ENCODE measurements at regions of chr19 and their contacts with region 1.

Region 1: DNA sequence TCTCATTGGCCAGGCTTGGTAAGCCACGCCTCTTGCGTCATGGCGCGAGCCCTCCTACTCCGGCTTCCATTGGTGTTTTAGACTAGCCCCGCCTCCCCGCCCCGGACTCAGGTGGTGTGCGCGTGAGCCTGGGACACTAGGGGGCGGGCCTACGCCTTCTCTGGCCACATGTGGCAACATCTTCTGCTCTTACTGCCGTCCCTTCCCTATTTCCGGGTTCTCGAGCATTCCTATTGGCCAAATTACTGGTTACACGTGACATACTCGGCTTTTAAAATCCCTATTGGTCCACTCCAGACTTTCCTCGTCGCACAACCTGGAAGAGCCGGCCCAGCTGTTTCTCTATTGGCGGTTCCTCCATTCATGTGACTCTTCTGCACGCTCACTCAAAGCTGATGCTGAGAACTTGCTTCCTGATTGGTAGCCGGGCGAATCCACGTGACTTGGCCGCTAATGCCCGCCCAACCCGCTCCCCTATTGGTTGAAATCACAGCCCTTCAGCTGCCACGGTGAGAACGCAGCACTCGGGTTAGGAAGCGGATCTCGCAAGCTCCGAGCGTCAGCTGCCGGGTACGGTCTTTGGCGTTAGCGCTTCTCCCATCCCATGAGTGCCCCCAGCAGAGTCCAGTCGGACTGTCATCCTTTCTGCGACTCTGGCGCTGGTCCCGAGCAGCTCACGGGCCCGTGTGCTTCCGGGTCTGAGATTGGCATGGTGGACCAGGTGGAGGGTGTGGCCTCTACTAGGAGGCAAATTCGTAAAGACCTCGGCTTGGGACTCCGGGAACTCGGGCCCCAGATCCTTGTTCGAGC is at the start of gene BLOC1S3:
- DNase-seq: peak; percentile 97 to 100 (median 100)
- ATAC-seq: peak; percentile 93
- H3K4me3 ChIP-seq: peak within 1 kb of the TSS; percentile 88
- H3K4me3 Mint-ChIP-seq: peak within 1 kb of the TSS; percentile 87 to 99 (median 96)
- H3K27ac ChIP-seq: peak within 1 kb of the TSS; percentile 83
- H3K27ac Mint-ChIP-seq: peak within 1 kb of the TSS; percentile 88 to 98 (median 94)
- H3K4me1 ChIP-seq: peaks cover 23 to 34% of the 10 kb centered on the region in 2 donors
- H3K4me1 Mint-ChIP-seq: peaks cover 9 to 63% (median 49%) of the 10 kb centered on the region in 7 donors
- H3K27me3 ChIP-seq: no peaks in the 10 kb centered on the region
- H3K27me3 Mint-ChIP-seq: no peaks in the 10 kb centered on the region
- total RNA-seq, gene BLOC1S3: 13.7 to 24.9 (median 15.4) TPM

Region 2: DNA sequence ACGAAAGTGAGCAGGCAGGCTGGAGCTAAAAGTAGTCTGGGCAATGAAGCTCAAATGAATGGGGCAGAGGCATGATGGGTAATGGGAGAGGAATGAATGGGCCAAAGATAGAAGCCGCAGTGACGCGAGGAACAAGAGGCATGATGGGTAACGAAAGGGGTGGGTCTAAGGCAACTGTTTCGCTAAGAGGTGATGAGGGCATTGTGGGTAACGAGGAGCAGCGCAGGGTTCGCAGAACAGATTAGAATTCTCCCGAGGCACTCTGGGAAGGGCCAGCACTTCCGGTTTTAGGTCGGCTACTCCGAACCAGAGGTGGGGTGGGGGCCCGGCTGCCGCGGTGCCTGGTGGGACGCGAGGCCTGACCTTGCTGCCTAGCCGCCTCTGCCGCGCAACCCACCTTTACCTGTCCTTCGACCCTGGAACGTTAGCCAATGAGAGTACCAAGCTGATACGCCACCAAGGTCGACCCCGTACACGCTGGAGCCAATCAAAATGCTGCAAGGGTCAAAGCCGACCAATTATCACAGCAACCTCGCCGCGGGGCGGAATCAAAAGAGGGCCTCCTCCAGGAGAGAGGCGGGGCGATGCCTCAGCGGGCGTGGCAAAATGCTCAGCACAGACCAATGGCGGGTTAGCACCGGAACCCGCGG is 288.0 kb before region 1 on chr19:
- CTCF ChIA-PET with region 1: no interaction called
- POLR2A ChIA-PET with region 1: interaction called, 3 read pairs
- intact Hi-C with region 1: loop called (anchors 1 to 2 kb)
- DNase-seq: peak; percentile 97 to 100 (median 100)
- ATAC-seq: peak; percentile 86
- H3K4me3 ChIP-seq: peak overlapping the region; percentile 69
- H3K4me3 Mint-ChIP-seq: peak overlapping the region; percentile 83 to 93 (median 89)
- H3K27ac ChIP-seq: peak overlapping the region; percentile 84
- H3K27ac Mint-ChIP-seq: peak overlapping the region; percentile 90 to 96 (median 94)
- H3K4me1 ChIP-seq: peaks cover 10 to 20% of the 10 kb centered on the region in 2 donors
- H3K4me1 Mint-ChIP-seq: peaks cover 18 to 44% (median 35%) of the 10 kb centered on the region in 7 donors
- H3K27me3 ChIP-seq: no peaks in the 10 kb centered on the region
- H3K27me3 Mint-ChIP-seq: no peaks in the 10 kb centered on the region

Region 3: DNA sequence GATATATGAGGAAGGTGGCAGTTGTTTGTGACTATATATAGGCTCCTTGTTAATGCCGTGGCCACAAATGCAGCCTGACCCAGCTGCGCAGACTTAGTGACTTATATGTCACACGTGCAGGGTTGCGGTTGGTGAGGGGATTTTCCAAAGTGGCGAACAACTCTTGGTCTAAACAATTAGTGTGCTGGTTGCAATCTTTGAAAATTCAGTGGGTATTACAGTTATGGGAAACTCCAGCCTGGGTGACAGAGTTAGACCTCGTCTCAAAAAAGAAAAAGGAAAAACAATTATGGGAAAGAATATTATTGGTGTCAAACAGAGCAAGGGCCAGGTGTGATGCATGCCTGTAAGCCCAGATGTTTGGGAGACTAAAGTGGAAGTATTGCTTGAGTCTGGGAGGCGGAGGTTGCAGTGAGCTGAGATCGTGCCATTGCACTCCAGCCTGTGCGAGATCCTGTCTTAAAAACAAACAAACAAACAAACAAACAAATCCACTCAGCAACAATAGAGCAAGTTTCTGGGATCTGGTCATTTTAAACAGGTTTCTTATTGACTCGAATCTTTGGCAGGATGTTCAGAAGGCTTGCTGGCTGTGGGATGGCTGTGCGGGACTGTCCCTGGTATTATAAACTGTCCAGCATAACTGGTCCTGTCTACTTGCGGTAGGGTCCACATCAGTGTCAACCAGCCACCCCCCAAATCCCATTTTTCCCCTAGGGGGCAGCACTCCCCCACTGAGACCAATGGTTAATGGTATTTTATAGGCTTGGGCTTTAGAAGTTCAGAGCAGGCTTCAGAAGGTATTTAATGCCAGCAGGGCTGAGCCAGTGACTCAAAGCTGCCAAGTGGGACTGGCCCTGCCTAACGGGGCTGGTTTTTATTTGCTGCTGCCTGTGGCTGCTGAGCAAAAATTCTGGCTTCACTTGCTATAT is 161.8 kb before region 1 on chr19:
- CTCF ChIA-PET with region 1: no interaction called
- POLR2A ChIA-PET with region 1: no interaction called
- intact Hi-C with region 1: loop called in 1 of 2 experiments (anchors 5 kb)
- DNase-seq: peak; percentile 28 to 75 (median 61)
- ATAC-seq: peak; percentile 81
- H3K4me3 ChIP-seq: peak overlapping the region; percentile 4
- H3K4me3 Mint-ChIP-seq: peak overlapping the region in 1 of 10 donors; percentile 25
- H3K27ac ChIP-seq: peak overlapping the region; percentile 40
- H3K27ac Mint-ChIP-seq: peak overlapping the region; percentile 23 to 89 (median 54)
- H3K4me1 ChIP-seq: peaks cover 0 to 11% of the 10 kb centered on the region in 2 donors
- H3K4me1 Mint-ChIP-seq: peaks cover 0 to 9% (median 0%) of the 10 kb centered on the region in 7 donors
- H3K27me3 ChIP-seq: no peaks in the 10 kb centered on the region
- H3K27me3 Mint-ChIP-seq: no peaks in the 10 kb centered on the region

Region 4: DNA sequence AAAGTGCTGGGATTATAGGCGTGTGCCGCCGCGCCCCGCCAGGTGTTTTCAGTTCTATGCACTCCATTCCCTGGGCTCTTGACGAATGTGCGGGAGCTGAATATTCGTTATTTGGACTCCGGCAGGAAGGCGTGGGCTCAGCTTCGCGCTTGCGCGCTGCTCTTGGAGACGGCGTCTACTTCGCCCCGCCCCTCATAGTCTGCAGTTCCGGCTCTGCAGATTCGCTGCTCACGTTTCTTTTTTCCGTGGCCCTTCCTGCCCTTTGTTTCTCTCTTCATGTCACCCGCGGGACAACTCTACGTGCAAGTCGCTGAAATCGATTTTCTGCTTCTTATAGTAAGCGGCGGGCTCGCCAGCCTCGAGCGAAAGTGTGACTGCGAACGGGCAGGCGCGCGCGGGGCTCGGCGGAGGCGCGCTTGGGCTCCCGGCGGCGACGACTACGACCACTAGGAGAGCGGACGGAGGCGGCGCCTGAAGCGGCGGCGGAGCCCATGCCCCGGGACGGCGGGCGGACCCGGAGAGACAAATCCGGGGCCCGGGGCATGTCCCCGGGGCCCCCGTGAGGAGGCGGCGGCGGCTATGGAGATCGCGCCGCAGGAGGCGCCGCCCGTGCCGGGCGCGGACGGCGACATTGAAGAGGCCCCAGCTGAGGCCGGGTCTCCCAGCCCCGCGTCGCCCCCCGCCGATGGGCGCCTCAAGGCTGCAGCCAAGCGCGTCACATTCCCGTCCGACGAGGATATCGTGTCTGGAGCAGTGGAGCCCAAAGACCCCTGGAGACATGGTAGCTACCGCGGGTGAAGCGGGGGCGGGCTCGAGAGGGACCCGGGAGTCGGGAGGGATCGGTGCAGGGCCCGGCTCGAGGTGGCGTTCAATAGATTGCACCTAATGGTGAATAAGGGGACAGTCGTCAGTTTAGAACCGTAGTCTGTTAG is 85.5 kb before region 1 on chr19 and contains the start of gene PPP1R37:
- CTCF ChIA-PET with region 1: interaction called, 11 read pairs
- POLR2A ChIA-PET with region 1: interaction called, 36 read pairs
- intact Hi-C with region 1: loop called (anchors 1 kb)
- DNase-seq: peak; percentile 81 to 97 (median 92)
- ATAC-seq: peak; percentile 85
- H3K4me3 ChIP-seq: peak within 1 kb of the TSS; percentile 75
- H3K4me3 Mint-ChIP-seq: peak within 1 kb of the TSS; percentile 87 to 99 (median 96)
- H3K27ac ChIP-seq: peak within 1 kb of the TSS; percentile 90
- H3K27ac Mint-ChIP-seq: peak within 1 kb of the TSS; percentile 96 to 100 (median 98)
- H3K4me1 ChIP-seq: peaks cover 33 to 46% of the 10 kb centered on the region in 2 donors
- H3K4me1 Mint-ChIP-seq: peaks cover 56 to 81% (median 60%) of the 10 kb centered on the region in 7 donors
- H3K27me3 ChIP-seq: no peaks in the 10 kb centered on the region
- H3K27me3 Mint-ChIP-seq: no peaks in the 10 kb centered on the region
- total RNA-seq, gene PPP1R37: 20.0 to 28.3 (median 21.9) TPM

Region 5: GRCh38 chr19:45250832-45251451 is 72.5 kb after region 1 on chr19 and contains the start of gene MARK4:
- CTCF ChIA-PET with region 1: no interaction called
- POLR2A ChIA-PET with region 1: interaction called, 3 read pairs
- intact Hi-C with region 1: loop called (anchors 1 to 2 kb)
- DNase-seq: peak in 8 of 9 donors; percentile 32 to 70 (median 51)
- ATAC-seq: peak; percentile 80
- H3K4me3 ChIP-seq: peak within 1 kb of the TSS; percentile 63
- H3K4me3 Mint-ChIP-seq: peak within 1 kb of the TSS; percentile 87 to 96 (median 94)
- H3K27ac ChIP-seq: peak within 1 kb of the TSS; percentile 72
- H3K27ac Mint-ChIP-seq: peak within 1 kb of the TSS; percentile 28 to 90 (median 81)
- H3K4me1 ChIP-seq: peaks cover 19 to 20% of the 10 kb centered on the region in 2 donors
- H3K4me1 Mint-ChIP-seq: peaks cover 23 to 42% (median 35%) of the 10 kb centered on the region in 7 donors
- H3K27me3 ChIP-seq: no peaks in the 10 kb centered on the region
- H3K27me3 Mint-ChIP-seq: peaks cover 0 to 5% (median 0%) of the 10 kb centered on the region in 5 donors
- total RNA-seq, gene MARK4: 22.4 to 39.2 (median 25.5) TPM

Region 6: GRCh38 chr19:45485305-45486077 is 307.0 kb after region 1 on chr19:
- CTCF ChIA-PET with region 1: no interaction called
- POLR2A ChIA-PET with region 1: interaction called, 3 read pairs
- intact Hi-C with region 1: loop called in 1 of 2 experiments (anchors 1 kb)
- DNase-seq: peak; percentile 91 to 98 (median 95)
- ATAC-seq: peak; percentile 99
- H3K4me3 ChIP-seq: peak overlapping the region; percentile 85
- H3K4me3 Mint-ChIP-seq: peak overlapping the region; percentile 83 to 96 (median 90)
- H3K27ac ChIP-seq: peak overlapping the region; percentile 60
- H3K27ac Mint-ChIP-seq: peak overlapping the region in 8 of 9 donors; percentile 34 to 88 (median 82)
- H3K4me1 ChIP-seq: peaks cover 0 to 4% of the 10 kb centered on the region in 2 donors
- H3K4me1 Mint-ChIP-seq: peaks cover 0 to 13% (median 5%) of the 10 kb centered on the region in 7 donors
- H3K27me3 ChIP-seq: no peaks in the 10 kb centered on the region
- H3K27me3 Mint-ChIP-seq: peaks cover 0 to 7% (median 0%) of the 10 kb centered on the region in 5 donors

Region 7: GRCh38 chr19:45717166-45717982 is 538.9 kb after region 1 on chr19:
- CTCF ChIA-PET with region 1: no interaction called
- POLR2A ChIA-PET with region 1: no interaction called
- intact Hi-C with region 1: loop called in 1 of 2 experiments (anchors 1 kb)
- DNase-seq: peak; percentile 92 to 99 (median 98)
- ATAC-seq: peak; percentile 98
- H3K4me3 ChIP-seq: peak overlapping the region; percentile 80
- H3K4me3 Mint-ChIP-seq: peak overlapping the region; percentile 89 to 99 (median 95)
- H3K27ac ChIP-seq: peak overlapping the region; percentile 89
- H3K27ac Mint-ChIP-seq: peak overlapping the region; percentile 88 to 97 (median 96)
- H3K4me1 ChIP-seq: peaks cover 17 to 26% of the 10 kb centered on the region in 2 donors
- H3K4me1 Mint-ChIP-seq: peaks cover 26 to 55% (median 38%) of the 10 kb centered on the region in 7 donors
- H3K27me3 ChIP-seq: no peaks in the 10 kb centered on the region
- H3K27me3 Mint-ChIP-seq: no peaks in the 10 kb centered on the region